Activated T-helper 1 cell treated with anti-CD3 and anti-CD28 coated beads, Interleukin-12 subunit alpha, Interleukin-12 subunit beta, Interleukin-2, Interleukin-4 antibody, amounts not matched to agents 30 ng/mL and 10 ng/mL and 1 ng/mL, durations not matched to agents 14 hours and 24 hours and 36 hours (primary cell): ENCODE measurements at regions of chr1 and their contacts with region 1.

Region 1: GRCh38 chr1:6127587-6128163 is 52.4 kb downstream of the CHD5 start:
- DNase-seq: peak; percentile 50
- H3K4me3 Mint-ChIP-seq: no peak overlapping the region
- H3K27ac Mint-ChIP-seq: no peak overlapping the region
- H3K4me1 Mint-ChIP-seq: no peaks in the 10 kb centered on the region
- H3K27me3 Mint-ChIP-seq: no peaks in the 10 kb centered on the region

Region 2: DNA sequence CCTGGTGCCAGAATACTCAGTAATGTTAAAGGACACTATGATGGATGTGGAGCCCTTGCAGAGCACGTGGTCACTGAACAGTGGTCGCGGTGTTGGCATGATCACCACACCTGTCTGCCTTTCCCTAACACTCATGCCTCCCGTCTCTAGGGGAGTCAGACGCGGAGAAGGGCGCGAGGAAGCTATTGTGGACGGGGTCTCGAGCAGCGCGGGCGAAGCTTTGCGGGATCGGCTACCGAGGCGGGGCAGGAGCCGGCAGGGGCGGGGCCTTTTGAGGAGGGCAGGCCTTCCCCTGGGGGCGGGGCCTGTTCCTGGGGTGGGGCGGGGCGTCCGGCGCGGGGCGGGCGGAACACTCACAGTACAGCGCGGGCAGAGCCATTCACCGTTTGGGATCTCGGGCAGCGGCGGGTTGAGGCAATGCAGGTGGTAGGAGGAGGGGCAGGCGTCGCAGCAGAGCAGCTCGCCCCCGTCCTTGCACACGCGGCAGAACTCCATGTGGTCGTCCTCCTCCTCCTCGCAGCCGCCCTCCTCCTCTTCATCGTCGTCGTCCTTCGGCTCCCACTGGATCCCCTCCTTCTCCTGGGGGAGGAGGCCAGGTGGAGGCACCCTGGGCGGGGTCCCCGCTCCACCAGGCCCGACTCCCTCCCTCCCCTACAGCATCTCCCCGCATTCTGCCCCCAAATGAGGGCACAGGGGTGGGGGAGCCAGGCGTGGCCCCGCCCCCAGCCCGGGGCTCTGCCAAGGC is 21.0 kb after region 1 on chr1:
- intact Hi-C with region 1: loop called (anchors 1 kb)
- DNase-seq: peak; percentile 51
- H3K4me3 Mint-ChIP-seq: peak overlapping the region; percentile 47
- H3K27ac Mint-ChIP-seq: no peak overlapping the region
- H3K4me1 Mint-ChIP-seq: no peaks in the 10 kb centered on the region
- H3K27me3 Mint-ChIP-seq: peaks cover 2% of the 10 kb centered on the region